Naive thymus-derived CD4-positive, alpha-beta T cell (primary cell): ENCODE measurements at regions of chr4 and their contacts with region 1.

Region 1: DNA sequence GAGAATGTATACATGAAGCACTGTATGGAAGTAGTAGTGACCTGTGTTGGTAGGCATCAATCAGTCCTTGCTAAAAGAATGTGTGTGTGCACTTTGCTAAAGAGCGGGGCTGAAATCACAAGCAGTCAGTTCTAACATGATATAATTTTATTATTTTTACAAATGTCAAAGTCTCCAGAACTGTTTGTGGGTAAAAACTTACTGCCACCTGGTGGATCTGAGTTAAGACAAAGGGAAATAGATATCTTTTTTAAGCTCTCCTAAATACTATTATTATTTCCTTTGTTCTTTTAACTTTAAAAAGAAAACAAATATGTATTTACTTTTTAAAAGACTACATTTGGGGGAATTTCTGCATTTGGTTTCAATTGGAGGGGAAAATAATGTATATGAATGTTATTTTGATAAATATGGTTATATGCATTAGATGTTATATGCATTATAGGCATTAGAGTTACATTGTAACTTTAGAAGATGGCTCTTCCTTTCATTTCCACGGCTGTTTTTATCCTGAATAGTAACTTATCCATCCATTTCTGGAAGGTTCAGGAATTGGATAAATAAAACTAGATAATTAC is 7.8 kb upstream of the CLOCK start:
- DNase-seq: peak in 5 of 9 donors; percentile 10 to 46 (median 36)
- ATAC-seq: peak; percentile 48
- H3K4me3 ChIP-seq: no peak overlapping the region
- H3K4me3 Mint-ChIP-seq: no peak overlapping the region
- H3K27ac ChIP-seq: no peak overlapping the region
- H3K27ac Mint-ChIP-seq: no peak overlapping the region
- H3K4me1 ChIP-seq: no peaks in the 10 kb centered on the region
- H3K4me1 Mint-ChIP-seq: peaks cover 0 to 10% (median 6%) of the 10 kb centered on the region in 7 donors
- H3K27me3 ChIP-seq: no peaks in the 10 kb centered on the region
- H3K27me3 Mint-ChIP-seq: peaks cover 0 to 15% (median 11%) of the 10 kb centered on the region in 5 donors

Region 2: DNA sequence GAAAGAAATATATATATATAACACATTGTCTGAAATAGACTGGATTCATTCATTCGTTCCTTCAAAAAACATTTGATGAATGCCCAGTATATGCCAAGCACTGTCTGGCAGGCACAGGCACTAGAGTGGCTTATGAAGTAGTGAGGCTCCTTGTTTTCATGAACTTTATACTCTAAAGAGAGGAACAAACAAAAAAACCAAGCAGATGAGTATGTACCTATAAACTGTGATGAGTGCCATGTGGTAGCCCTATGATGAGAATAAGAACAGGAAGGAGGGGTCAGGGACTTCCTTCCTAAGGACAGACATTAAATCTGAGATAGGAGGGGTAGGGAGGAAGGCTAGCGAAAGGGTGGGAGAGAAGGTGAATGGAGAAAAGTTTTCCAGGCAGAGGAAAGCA is 1344.9 kb before region 1 on chr4:
- CTCF ChIA-PET with region 1: no interaction called
- POLR2A ChIA-PET with region 1: no interaction called
- intact Hi-C with region 1: no loop called
- DNase-seq: no peak
- ATAC-seq: no peak
- H3K4me3 ChIP-seq: no peak overlapping the region
- H3K4me3 Mint-ChIP-seq: no peak overlapping the region
- H3K27ac ChIP-seq: no peak overlapping the region
- H3K27ac Mint-ChIP-seq: no peak overlapping the region
- H3K4me1 ChIP-seq: no peaks in the 10 kb centered on the region
- H3K4me1 Mint-ChIP-seq: no peaks in the 10 kb centered on the region
- H3K27me3 ChIP-seq: peaks cover 0 to 2% of the 10 kb centered on the region in 2 donors
- H3K27me3 Mint-ChIP-seq: peaks cover 3 to 32% (median 26%) of the 10 kb centered on the region in 5 donors

Region 3: GRCh38 chr4:54971474-54971950 is 583.0 kb before region 1 on chr4:
- CTCF ChIA-PET with region 1: interaction called, 3 read pairs
- POLR2A ChIA-PET with region 1: no interaction called
- intact Hi-C with region 1: loop called in 1 of 2 experiments (anchors 1 kb)
- DNase-seq: peak in 4 of 9 donors; percentile 24 to 34 (median 32)
- ATAC-seq: peak; percentile 67
- H3K4me3 ChIP-seq: no peak overlapping the region
- H3K4me3 Mint-ChIP-seq: no peak overlapping the region
- H3K27ac ChIP-seq: no peak overlapping the region
- H3K27ac Mint-ChIP-seq: no peak overlapping the region
- H3K4me1 ChIP-seq: no peaks in the 10 kb centered on the region
- H3K4me1 Mint-ChIP-seq: no peaks in the 10 kb centered on the region
- H3K27me3 ChIP-seq: no peaks in the 10 kb centered on the region
- H3K27me3 Mint-ChIP-seq: peaks cover 0 to 13% (median 9%) of the 10 kb centered on the region in 5 donors

Region 4: GRCh38 chr4:55345980-55346850 is 208.3 kb before region 1 on chr4 and contains the start of gene SRD5A3:
- CTCF ChIA-PET with region 1: interaction called, 7 read pairs
- POLR2A ChIA-PET with region 1: no interaction called
- intact Hi-C with region 1: loop called (anchors 1 kb)
- DNase-seq: peak; percentile 53 to 92 (median 72)
- ATAC-seq: peak; percentile 97
- H3K4me3 ChIP-seq: peak within 1 kb of the TSS; percentile 79
- H3K4me3 Mint-ChIP-seq: peak within 1 kb of the TSS; percentile 83 to 94 (median 90)
- H3K27ac ChIP-seq: peak within 1 kb of the TSS; percentile 69
- H3K27ac Mint-ChIP-seq: peak within 1 kb of the TSS; percentile 70 to 91 (median 87)
- H3K4me1 ChIP-seq: peaks cover 6 to 8% of the 10 kb centered on the region in 2 donors
- H3K4me1 Mint-ChIP-seq: peaks cover 8 to 23% (median 19%) of the 10 kb centered on the region in 7 donors
- H3K27me3 ChIP-seq: no peaks in the 10 kb centered on the region
- H3K27me3 Mint-ChIP-seq: no peaks in the 10 kb centered on the region
- total RNA-seq, gene SRD5A3: 1.9 to 8.5 (median 4.5) TPM

Region 5: GRCh38 chr4:55409468-55410171 is 144.9 kb before region 1 on chr4:
- CTCF ChIA-PET with region 1: no interaction called
- POLR2A ChIA-PET with region 1: no interaction called
- intact Hi-C with region 1: loop called in 1 of 2 experiments (anchors 1 kb)
- DNase-seq: peak in 3 of 9 donors; percentile 9 to 19 (median 14)
- ATAC-seq: peak; percentile 44
- H3K4me3 ChIP-seq: no peak overlapping the region
- H3K4me3 Mint-ChIP-seq: no peak overlapping the region
- H3K27ac ChIP-seq: no peak overlapping the region
- H3K27ac Mint-ChIP-seq: peak overlapping the region in 6 of 9 donors; percentile 10 to 68 (median 48)
- H3K4me1 ChIP-seq: peaks cover 0 to 4% of the 10 kb centered on the region in 2 donors
- H3K4me1 Mint-ChIP-seq: peaks cover 29 to 50% (median 40%) of the 10 kb centered on the region in 7 donors
- H3K27me3 ChIP-seq: no peaks in the 10 kb centered on the region
- H3K27me3 Mint-ChIP-seq: no peaks in the 10 kb centered on the region